Activated T-helper 1 cell treated with anti-CD3 and anti-CD28 coated beads, Interleukin-12 subunit alpha, Interleukin-12 subunit beta, Interleukin-2, Interleukin-4 antibody, amounts not matched to agents 30 ng/mL and 10 ng/mL and 1 ng/mL, durations not matched to agents 14 hours and 24 hours and 36 hours (primary cell): ENCODE measurements at regions of chr10 and their contacts with region 1.

Region 1: GRCh38 chr10:99548041-99548530 is 15.3 kb downstream of the NKX2-3 start:
- DNase-seq: no peak
- H3K4me3 Mint-ChIP-seq: no peak overlapping the region
- H3K27ac Mint-ChIP-seq: no peak overlapping the region
- H3K4me1 Mint-ChIP-seq: no peaks in the 10 kb centered on the region
- H3K27me3 Mint-ChIP-seq: peaks cover 33% of the 10 kb centered on the region

Region 2: DNA sequence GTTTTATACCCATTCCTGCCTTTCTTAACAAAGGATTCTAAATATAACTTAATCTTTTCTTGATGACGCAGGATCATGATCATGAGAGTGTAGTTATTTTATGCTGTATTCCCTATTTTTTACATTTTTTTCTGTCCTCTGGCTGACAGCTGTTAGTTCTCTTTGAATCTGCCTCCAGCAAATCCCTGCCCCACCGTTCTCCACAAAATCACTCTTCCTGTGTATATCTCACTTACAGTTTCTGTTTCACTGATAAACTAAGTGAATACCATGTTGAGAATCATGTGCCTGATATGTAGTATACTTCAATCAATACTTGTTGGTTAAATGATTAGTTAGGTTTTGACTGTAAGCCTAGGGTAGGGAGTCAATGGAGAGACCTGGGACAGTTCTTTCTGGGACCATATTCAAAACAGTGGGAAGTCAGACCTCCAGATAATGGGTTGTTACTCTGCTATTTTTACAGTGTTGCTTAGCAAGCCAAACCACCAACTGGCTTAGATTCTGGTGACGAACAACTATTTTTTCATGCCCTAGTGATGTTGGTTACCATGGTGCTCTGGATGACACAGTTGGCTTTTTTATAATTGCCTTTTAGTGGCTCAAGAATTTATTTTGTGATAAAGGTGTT is 206.1 kb before region 1 on chr10:
- intact Hi-C with region 1: no loop called
- DNase-seq: no peak
- H3K4me3 Mint-ChIP-seq: no peak overlapping the region
- H3K27ac Mint-ChIP-seq: no peak overlapping the region
- H3K4me1 Mint-ChIP-seq: no peaks in the 10 kb centered on the region
- H3K27me3 Mint-ChIP-seq: peaks cover 10% of the 10 kb centered on the region

Region 3: GRCh38 chr10:99395750-99396445 is 152.2 kb before region 1 on chr10:
- intact Hi-C with region 1: loop called (anchors 1 kb)
- DNase-seq: no peak
- H3K4me3 Mint-ChIP-seq: no peak overlapping the region
- H3K27ac Mint-ChIP-seq: peak overlapping the region; percentile 6
- H3K4me1 Mint-ChIP-seq: peaks cover 7% of the 10 kb centered on the region
- H3K27me3 Mint-ChIP-seq: peaks cover 4% of the 10 kb centered on the region

Region 4: DNA sequence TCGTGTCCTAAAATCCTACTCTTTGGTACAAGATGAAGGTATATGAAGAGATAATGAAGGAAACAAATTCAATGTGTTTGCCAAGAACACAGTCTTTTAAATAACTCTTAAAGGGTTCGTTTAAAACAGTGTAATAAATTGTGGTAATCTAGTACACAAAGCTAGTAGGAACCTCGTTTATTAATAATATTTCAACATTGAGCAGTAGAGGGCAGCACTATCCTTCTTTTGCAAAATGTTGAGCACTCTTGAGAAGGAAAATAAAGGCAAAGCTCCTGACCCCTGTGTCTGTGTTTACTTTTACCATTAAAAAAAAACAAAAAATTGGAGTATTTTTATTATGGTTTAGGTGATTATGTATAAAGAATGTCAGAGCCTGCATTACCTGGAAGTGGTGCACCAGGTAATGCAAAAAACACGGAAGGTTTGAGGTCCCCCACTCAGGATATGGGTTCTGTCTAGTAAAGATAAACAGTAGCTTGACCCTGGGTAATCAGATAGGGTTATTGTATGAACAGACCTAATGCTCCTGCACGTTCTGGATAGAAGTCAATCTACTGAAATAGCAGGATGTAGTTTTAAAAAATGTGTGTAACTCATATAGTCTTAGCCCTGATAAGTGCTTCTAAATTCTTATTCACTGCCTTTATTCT is 112.0 kb before region 1 on chr10:
- intact Hi-C with region 1: loop called (anchors 1 kb)
- DNase-seq: no peak
- H3K4me3 Mint-ChIP-seq: no peak overlapping the region
- H3K27ac Mint-ChIP-seq: no peak overlapping the region
- H3K4me1 Mint-ChIP-seq: peaks cover 13% of the 10 kb centered on the region
- H3K27me3 Mint-ChIP-seq: no peaks in the 10 kb centered on the region

Region 5: GRCh38 chr10:99497343-99498025 is 50.6 kb before region 1 on chr10:
- intact Hi-C with region 1: no loop called
- DNase-seq: no peak
- H3K4me3 Mint-ChIP-seq: no peak overlapping the region
- H3K27ac Mint-ChIP-seq: no peak overlapping the region
- H3K4me1 Mint-ChIP-seq: no peaks in the 10 kb centered on the region
- H3K27me3 Mint-ChIP-seq: peaks cover 2% of the 10 kb centered on the region

Region 6: GRCh38 chr10:99532687-99533495 is 15.2 kb before region 1 on chr10 and contains the start of gene NKX2-3:
- intact Hi-C with region 1: no loop called
- DNase-seq: peak; percentile 6
- H3K4me3 Mint-ChIP-seq: peak within 1 kb of the TSS; percentile 22
- H3K27ac Mint-ChIP-seq: peak within 1 kb of the TSS; percentile 73
- H3K4me1 Mint-ChIP-seq: peaks cover 47% of the 10 kb centered on the region
- H3K27me3 Mint-ChIP-seq: peaks cover 87% of the 10 kb centered on the region
- total RNA-seq, gene NKX2-3: not detected in 2 replicates

Region 7: GRCh38 chr10:99560277-99561126 is 12.4 kb after region 1 on chr10:
- intact Hi-C with region 1: no loop called
- DNase-seq: peak; percentile 17
- H3K4me3 Mint-ChIP-seq: no peak overlapping the region
- H3K27ac Mint-ChIP-seq: no peak overlapping the region
- H3K4me1 Mint-ChIP-seq: peaks cover 9% of the 10 kb centered on the region
- H3K27me3 Mint-ChIP-seq: peaks cover 14% of the 10 kb centered on the region